Activated CD4-positive, alpha-beta memory T cell treated with anti-CD3 and anti-CD28 coated beads for 36 hours (primary cell): ENCODE measurements at regions of chrX and their contacts with region 1.

Region 1: GRCh38 chrX:154411322-154411980 is at the start of gene TAFAZZIN:
- DNase-seq: peak; percentile 84
- H3K4me3 Mint-ChIP-seq: peak within 1 kb of the TSS; percentile 91
- H3K27ac Mint-ChIP-seq: peak within 1 kb of the TSS; percentile 96
- H3K4me1 Mint-ChIP-seq: peaks cover 16% of the 10 kb centered on the region
- H3K27me3 Mint-ChIP-seq: no peaks in the 10 kb centered on the region
- total RNA-seq, gene TAFAZZIN: 58.6 to 66.4 TPM

Region 2: DNA sequence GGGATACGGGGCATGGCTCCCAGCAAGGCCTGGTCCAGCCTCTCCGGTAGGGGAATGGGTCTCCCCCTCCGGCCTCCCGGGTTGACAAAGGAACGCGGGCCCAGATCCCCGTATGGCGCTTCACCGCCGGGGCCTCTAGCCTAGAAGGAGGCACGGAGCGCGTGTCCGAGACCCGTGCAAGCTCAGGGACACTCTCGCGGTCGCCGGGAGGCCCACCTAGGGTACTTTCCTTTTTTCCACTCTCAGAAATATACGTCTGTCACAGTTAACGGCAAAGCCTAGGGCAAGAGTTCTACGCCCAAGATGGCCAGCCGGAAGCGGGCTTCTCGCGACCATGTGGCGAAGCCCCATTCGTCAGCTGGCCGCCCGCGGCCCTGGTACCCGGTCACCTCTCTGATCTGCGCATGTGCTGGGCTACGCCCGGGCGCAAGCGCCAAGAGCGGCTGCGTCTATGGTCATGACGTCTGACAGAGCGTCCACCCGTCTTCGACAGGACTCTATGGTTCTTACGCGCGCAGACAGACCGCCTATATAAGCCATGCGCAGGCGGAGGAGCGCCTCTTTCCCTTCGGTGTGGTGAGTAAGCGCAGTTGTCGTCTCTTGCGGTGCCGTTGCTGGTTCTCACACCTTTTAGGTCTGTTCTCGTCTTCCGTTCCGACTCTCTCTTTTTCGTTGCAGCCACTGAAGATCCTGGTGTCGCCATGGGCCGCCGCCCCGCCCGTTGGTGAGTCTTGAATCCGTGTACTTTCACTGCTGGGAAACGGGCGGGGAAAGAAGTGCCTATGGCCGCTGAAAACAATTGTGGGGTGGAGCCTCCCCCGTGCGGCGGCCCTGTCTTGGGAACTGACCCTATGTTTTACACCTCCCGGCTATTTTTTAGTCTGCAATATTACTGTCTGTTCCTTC is 13.4 kb before region 1 on chrX and contains the start of gene RPL10:
- CTCF ChIA-PET with region 1: interaction called, 8 read pairs
- POLR2A ChIA-PET with region 1: interaction called, 35 read pairs
- intact Hi-C with region 1: no loop called
- DNase-seq: peak; percentile 95
- H3K4me3 Mint-ChIP-seq: peak within 1 kb of the TSS; percentile 91
- H3K27ac Mint-ChIP-seq: peak within 1 kb of the TSS; percentile 100
- H3K4me1 Mint-ChIP-seq: peaks cover 7% of the 10 kb centered on the region
- H3K27me3 Mint-ChIP-seq: no peaks in the 10 kb centered on the region
- total RNA-seq, gene RPL10: 3,597 to 3,654 TPM